K562 (cell line): ENCODE measurements at regions of chr5 and their contacts with region 1.

Region 1: GRCh38 chr5:149079883-149080282 is 17.0 kb upstream of the SH3TC2 start:
- DNase-seq: peak in 2 of 4 experiments; percentile 11 to 42
- ATAC-seq: no peak
- H3K4me3 ChIP-seq: no peak overlapping the region
- H3K27ac ChIP-seq: no peak overlapping the region
- H3K4me1 ChIP-seq: no peaks in the 10 kb centered on the region
- H3K27me3 ChIP-seq: no peaks in the 10 kb centered on the region; a peak in 1 of 5 replicates
- CTCF ChIP-seq: no peak
- EP300 ChIP-seq: peak; percentile 84
- POLR2A ChIP-seq: no peak
- RAD21 ChIP-seq: no peak

Region 2: DNA sequence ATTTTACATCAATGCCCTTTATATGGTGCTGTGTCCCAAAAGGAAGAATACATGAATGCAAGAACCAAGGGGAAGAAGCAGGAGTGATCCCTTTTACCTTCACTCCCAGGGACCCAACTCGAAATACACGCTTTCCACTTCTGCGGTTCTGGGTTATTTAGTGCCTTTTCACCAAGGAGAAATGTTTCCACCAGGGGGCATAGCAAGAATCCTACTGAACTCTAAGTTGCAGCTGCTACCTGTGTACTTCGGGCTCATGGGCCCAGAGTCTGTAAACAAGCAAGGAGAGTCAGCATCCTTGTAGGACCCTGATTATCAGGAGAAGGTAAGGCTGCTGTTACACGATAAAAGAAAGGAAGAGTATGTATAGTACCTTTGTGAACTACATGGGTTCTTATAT is 1615.7 kb before region 1 on chr5:
- CTCF ChIA-PET with region 1: no interaction called
- POLR2A ChIA-PET with region 1: no interaction called
- in situ Hi-C with region 1: no loop called
- intact Hi-C with region 1: loop called (anchors 5 kb)
- DNase-seq: peak in 1 of 4 experiments; percentile 5
- ATAC-seq: no peak
- H3K4me3 ChIP-seq: no peak overlapping the region
- H3K27ac ChIP-seq: no peak overlapping the region
- H3K4me1 ChIP-seq: no peaks in the 10 kb centered on the region
- H3K27me3 ChIP-seq: no peaks in the 10 kb centered on the region
- CTCF ChIP-seq: no peak
- EP300 ChIP-seq: no peak
- POLR2A ChIP-seq: no peak
- RAD21 ChIP-seq: no peak

Region 3: DNA sequence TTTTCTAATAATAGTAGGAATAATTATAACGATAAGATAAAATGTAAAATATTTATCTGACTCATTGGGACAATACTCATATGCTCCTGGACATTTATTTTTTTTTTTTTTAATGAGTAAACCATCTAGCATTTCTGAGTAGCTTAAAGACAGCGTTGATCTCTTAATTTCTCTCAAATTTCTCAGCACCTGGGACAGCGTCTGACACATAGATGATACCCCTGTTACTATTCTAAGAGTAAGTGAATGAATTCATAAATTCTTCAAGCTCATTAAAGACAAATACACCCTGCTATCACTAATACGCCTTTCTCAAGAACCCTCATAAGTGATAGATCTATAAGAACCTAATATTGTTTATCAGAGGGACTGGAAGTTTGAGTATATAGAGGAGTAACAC is 413.5 kb before region 1 on chr5:
- CTCF ChIA-PET with region 1: no interaction called
- POLR2A ChIA-PET with region 1: no interaction called
- in situ Hi-C with region 1: no loop called
- intact Hi-C with region 1: no loop called
- DNase-seq: no peak
- ATAC-seq: no peak
- H3K4me3 ChIP-seq: no peak overlapping the region
- H3K27ac ChIP-seq: no peak overlapping the region
- H3K4me1 ChIP-seq: no peaks in the 10 kb centered on the region
- H3K27me3 ChIP-seq: no peaks in the 10 kb centered on the region
- CTCF ChIP-seq: no peak
- EP300 ChIP-seq: no peak
- POLR2A ChIP-seq: no peak
- RAD21 ChIP-seq: no peak